Prostate gland (tissue), 2 donors: ENCODE measurements at regions of chr5 and their contacts with region 1.

Region 1: DNA sequence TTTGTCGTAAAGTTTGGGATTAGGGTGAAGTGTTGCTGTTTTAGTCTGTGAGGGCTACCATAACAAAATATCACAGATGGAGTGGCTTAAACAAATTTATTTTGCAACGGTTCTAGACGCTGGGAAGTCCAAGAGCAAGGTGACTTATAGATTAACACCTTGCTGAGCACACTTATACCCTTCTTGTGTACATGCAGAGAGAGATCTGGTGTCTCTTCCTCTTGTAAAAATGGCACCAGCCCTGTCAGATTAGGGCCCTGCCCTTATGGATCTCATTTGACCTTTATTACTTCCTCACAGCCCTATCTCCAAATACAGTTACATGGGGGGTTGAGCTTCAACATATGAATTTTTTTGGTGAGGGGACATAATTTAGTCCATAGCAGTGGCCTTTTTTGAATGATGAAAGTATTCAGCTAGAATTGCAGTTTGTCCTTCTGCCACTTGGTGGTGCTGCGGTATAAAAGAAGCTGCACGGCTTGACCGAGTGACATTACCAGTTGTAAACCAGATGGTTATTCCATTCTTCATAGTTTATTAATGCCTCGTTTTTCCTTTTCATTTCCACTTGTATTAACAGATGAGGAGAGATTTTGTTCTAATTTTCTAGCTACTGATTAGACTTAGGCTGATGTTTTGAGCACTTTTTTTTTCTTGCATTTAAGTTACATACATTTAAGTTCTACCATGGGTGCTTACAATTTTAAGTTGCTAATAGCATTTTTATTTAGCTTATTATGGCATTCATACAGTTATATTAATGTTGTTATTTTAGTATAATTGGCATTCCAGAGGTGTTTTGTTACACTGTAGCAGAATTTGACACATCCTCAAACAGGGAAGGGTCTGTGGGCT is 19.4 kb downstream of the DCP2 start:
- DNase-seq: peak; percentile 65
- H3K4me3 ChIP-seq: no peak overlapping the region
- H3K27ac ChIP-seq: no peak overlapping the region
- H3K4me1 ChIP-seq: no peaks in the 10 kb centered on the region
- H3K27me3 ChIP-seq: no peaks in the 10 kb centered on the region
- CTCF ChIP-seq: peak in 3 of 4 experiments; percentile 84 to 86 (median 84)
- POLR2A ChIP-seq: no peak

Region 2: DNA sequence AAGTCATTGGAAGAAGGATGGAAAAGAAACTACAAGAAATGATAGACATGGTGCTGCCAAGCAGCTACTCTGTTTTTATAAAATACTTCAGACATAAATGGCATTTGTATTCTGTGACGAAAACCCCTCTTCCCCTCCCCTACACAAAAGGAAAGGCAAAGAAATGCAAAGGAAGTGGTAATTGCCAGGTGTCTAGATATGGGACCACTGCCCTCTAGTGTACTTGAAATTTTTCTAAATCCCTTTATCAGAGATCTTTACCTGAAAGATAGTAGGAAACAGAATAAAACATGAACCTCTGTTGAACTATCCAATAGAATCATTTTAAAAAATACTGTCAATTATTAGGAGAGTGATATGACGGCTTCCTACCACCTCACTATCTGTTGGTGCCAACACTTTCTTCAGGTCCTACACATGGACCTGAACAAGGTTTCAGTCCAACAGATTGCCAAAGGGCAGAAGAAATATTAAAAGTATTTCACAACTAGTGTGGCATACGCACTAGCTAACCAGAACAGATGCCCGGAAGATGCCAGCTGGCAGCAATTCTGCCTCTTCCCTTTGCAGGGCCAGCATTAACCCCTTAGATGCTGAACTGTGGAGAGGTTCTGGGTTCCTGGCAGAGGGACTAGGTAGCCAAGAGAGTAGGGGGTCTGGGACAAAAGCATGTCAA is 334.7 kb after region 1 on chr5:
- intact Hi-C with region 1: loop called (anchors 5 kb)
- DNase-seq: peak; percentile 57
- H3K4me3 ChIP-seq: no peak overlapping the region
- H3K27ac ChIP-seq: no peak overlapping the region
- H3K4me1 ChIP-seq: no peaks in the 10 kb centered on the region
- H3K27me3 ChIP-seq: no peaks in the 10 kb centered on the region
- CTCF ChIP-seq: peak in 3 of 4 experiments; percentile 43 to 56 (median 49)
- POLR2A ChIP-seq: no peak

Region 3: GRCh38 chr5:113378959-113379541 is 383.1 kb after region 1 on chr5:
- intact Hi-C with region 1: loop called (anchors 10 kb)
- DNase-seq: peak; percentile 58
- H3K4me3 ChIP-seq: no peak overlapping the region
- H3K27ac ChIP-seq: no peak overlapping the region
- H3K4me1 ChIP-seq: no peaks in the 10 kb centered on the region
- H3K27me3 ChIP-seq: no peaks in the 10 kb centered on the region
- CTCF ChIP-seq: peak; percentile 53 to 72 (median 68)
- POLR2A ChIP-seq: no peak

Region 4: GRCh38 chr5:113474100-113474728 is 478.2 kb after region 1 on chr5:
- intact Hi-C with region 1: no loop called
- DNase-seq: no peak
- H3K4me3 ChIP-seq: no peak overlapping the region
- H3K27ac ChIP-seq: no peak overlapping the region
- H3K4me1 ChIP-seq: no peaks in the 10 kb centered on the region
- H3K27me3 ChIP-seq: no peaks in the 10 kb centered on the region
- CTCF ChIP-seq: no peak
- POLR2A ChIP-seq: no peak

Region 5: GRCh38 chr5:113513384-113514288 is 517.6 kb after region 1 on chr5 and contains the start of gene YTHDC2:
- intact Hi-C with region 1: loop called (anchors 5 kb)
- DNase-seq: peak; percentile 65
- H3K4me3 ChIP-seq: peak within 1 kb of the TSS; percentile 60 to 68
- H3K27ac ChIP-seq: peak within 1 kb of the TSS; percentile 80 to 90
- H3K4me1 ChIP-seq: no peaks in the 10 kb centered on the region
- H3K27me3 ChIP-seq: no peaks in the 10 kb centered on the region
- CTCF ChIP-seq: peak in 3 of 4 experiments; percentile 8 to 42 (median 21)
- POLR2A ChIP-seq: peak; percentile 65
- total RNA-seq, gene YTHDC2: 17.7 to 32.0 TPM

Region 6: DNA sequence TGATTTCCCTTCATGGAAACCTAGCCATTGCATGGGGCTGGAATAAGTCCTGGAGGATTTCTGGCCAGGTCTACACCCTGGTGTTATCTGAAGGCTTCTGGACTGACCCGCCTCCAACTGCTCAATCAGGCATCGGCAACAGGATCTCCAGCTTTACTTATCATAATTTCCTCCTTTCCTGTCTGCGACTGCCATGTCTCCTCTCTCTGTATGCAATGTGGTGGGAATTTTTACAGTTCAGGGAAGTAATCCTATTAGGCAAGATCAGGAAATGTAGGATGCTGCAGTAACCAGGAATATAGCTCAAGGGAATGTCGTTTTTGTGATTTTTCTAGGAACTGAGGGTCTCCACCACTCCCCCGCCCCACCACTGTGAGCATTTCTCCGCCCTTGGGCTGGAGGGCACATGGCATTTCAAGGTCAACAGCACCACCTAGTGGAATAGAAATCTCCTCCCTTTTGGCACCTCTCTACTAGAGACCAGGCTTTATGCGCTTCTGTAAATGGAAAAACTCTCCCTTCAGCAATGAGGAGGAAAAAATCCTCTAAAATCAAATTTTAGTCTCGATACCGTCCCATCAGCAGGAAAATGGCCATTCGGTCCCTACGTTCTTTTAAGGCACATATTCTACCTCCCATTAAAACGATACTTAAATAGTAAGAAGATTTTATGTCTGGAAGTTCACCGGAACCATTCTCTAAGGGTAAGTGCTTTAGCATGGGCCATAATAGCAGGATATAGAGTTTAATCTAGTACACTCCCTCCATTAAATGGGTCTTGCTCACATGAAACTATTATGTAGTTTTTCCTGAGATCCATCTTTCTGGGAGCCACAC is 610.5 kb after region 1 on chr5:
- intact Hi-C with region 1: loop called (anchors 5 kb)
- DNase-seq: peak; percentile 33
- H3K4me3 ChIP-seq: no peak overlapping the region
- H3K27ac ChIP-seq: no peak overlapping the region
- H3K4me1 ChIP-seq: no peaks in the 10 kb centered on the region
- H3K27me3 ChIP-seq: no peaks in the 10 kb centered on the region
- CTCF ChIP-seq: peak; percentile 57 to 74 (median 70)
- POLR2A ChIP-seq: no peak